Heart right ventricle (tissue), 16 donors: ENCODE measurements at regions of chr5 and their contacts with region 1.

Region 1: DNA sequence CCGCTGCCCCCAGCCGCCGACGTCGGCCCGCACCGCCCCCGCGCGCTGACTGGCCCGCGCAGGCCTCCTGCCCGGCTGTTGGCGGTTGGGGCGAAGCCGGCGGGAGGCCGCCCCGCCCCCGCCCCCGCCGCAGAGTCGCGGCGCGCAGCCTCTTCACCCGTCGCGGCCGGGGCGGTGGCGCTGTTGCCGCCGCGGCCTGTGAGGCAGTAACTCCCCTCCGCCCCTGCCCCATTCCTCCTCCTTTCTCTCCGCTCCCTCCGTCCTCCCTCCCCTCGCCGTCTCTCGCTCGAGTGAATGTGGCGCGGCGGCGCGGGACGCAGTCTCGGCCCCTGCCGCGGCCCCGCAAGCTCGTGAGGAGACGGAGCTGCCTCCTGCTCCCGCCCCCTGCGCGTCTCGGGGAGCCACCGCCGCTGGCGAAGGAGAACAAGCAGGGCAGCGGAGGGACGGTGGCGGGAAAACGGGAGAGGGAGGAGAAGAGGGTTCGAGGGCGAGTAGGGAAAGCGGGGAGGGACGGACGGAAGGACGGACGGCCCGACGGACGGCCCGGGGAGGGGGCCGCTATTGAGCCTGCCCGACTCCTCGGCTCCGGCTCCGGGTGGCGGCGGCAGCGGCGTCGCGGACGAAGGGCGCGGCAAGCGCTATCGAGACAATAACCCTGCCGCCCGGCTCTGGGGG is 637 bp upstream of the ERBIN start:
- DNase-seq: peak; percentile 82 to 87
- ATAC-seq: peak; percentile 81 to 94 (median 89)
- H3K4me3 ChIP-seq: peak overlapping the region; percentile 69 to 95 (median 90)
- H3K27ac ChIP-seq: peak overlapping the region; percentile 92 to 100 (median 100)
- H3K4me1 ChIP-seq: peaks cover 0 to 46% (median 33%) of the 10 kb centered on the region in 9 donors
- H3K27me3 ChIP-seq: no peaks in the 10 kb centered on the region
- CTCF ChIP-seq: peak in 8 of 9 donors; percentile 27 to 67 (median 38)

Region 2: DNA sequence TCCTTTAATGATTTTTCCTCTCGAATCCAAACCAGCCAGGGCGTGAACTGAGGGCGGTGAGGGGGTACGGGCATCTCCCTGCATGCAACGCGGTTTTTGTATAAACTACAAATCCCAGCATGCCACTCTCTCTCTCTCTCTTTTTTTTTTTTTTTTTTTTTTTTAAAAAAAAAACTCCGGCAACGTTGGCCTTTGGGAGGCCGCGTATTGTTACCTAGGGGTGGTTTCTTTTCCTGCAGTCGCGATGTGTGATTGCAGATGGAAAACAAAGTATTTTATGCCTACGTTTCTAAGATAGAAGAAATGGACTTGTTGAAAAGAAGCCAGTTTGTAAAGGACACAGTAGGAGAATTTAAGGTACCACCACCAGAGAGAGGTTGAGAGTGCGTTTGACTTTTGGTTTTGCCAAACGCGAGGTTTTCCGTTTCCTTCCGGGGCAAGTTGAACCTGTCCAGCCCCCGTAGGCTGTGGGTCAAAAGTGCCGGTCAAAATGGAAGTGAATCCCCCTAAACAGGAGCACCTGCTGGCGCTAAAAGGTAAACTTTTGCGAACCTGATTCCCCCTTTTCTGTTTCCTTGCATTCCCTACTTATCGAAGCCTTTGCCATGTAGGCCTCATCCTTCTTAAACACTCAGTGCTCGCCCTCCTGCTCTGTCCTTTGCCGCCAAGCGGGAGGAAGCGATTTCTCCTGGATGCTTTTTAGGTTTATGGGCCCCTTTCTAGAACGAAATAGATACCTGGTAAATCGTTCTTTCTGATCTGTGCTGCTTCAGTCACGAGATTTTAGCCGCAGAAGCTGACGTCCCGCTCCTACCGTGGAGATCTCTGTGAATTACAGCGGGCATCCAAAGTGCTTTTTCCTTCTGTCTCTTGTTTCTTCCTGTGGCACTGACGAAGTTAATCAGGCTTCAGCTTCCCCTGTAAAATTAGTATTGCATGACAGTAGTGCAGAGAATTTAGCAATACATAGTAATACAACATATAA is 300.9 kb before region 1 on chr5 and contains the starts of genes SHLD3 and TRAPPC13:
- intact Hi-C with region 1: loop called in 1 of 10 experiments (anchors 10 kb)
- DNase-seq: peak; percentile 60 to 88
- ATAC-seq: peak; percentile 90 to 96 (median 92)
- H3K4me3 ChIP-seq: peak within 1 kb of the TSS; percentile 71 to 100 (median 87)
- H3K27ac ChIP-seq: peak within 1 kb of the TSS; percentile 72 to 94 (median 90)
- H3K4me1 ChIP-seq: peaks cover 4 to 46% (median 39%) of the 10 kb centered on the region in 9 donors
- H3K27me3 ChIP-seq: no peaks in the 10 kb centered on the region
- CTCF ChIP-seq: peak in 2 of 9 donors; percentile 6 to 7
- total RNA-seq, gene SHLD3: 1.1 to 2.2 (median 1.8) TPM
- total RNA-seq, gene TRAPPC13: 17.7 to 26.3 (median 20.6) TPM

Region 3: GRCh38 chr5:65749956-65750355 is 175.8 kb before region 1 on chr5:
- intact Hi-C with region 1: loop called in 1 of 10 experiments (anchors 10 kb)
- DNase-seq: no peak
- ATAC-seq: no peak
- H3K4me3 ChIP-seq: no peak overlapping the region
- H3K27ac ChIP-seq: no peak overlapping the region
- H3K4me1 ChIP-seq: peaks cover 0 to 9% (median 0%) of the 10 kb centered on the region in 9 donors
- H3K27me3 ChIP-seq: no peaks in the 10 kb centered on the region
- CTCF ChIP-seq: no peak

Region 4: GRCh38 chr5:65774346-65774745 is 151.4 kb before region 1 on chr5:
- intact Hi-C with region 1: no loop called
- DNase-seq: no peak
- ATAC-seq: no peak
- H3K4me3 ChIP-seq: no peak overlapping the region
- H3K27ac ChIP-seq: no peak overlapping the region
- H3K4me1 ChIP-seq: peaks cover 0 to 14% (median 4%) of the 10 kb centered on the region in 9 donors
- H3K27me3 ChIP-seq: no peaks in the 10 kb centered on the region
- CTCF ChIP-seq: no peak

Region 5: GRCh38 chr5:66021585-66021984 is 95.8 kb after region 1 on chr5:
- intact Hi-C with region 1: loop called in 2 of 10 experiments (anchors 5 to 10 kb)
- DNase-seq: no peak
- ATAC-seq: no peak
- H3K4me3 ChIP-seq: no peak overlapping the region
- H3K27ac ChIP-seq: no peak overlapping the region
- H3K4me1 ChIP-seq: no peaks in the 10 kb centered on the region
- H3K27me3 ChIP-seq: no peaks in the 10 kb centered on the region
- CTCF ChIP-seq: no peak

Region 6: GRCh38 chr5:66144074-66144833 is 218.5 kb after region 1 on chr5 and contains the start of gene SREK1:
- intact Hi-C with region 1: loop called in 8 of 10 experiments (anchors 2 to 10 kb)
- DNase-seq: peak; percentile 91 to 93
- ATAC-seq: peak; percentile 95 to 99 (median 97)
- H3K4me3 ChIP-seq: peak within 1 kb of the TSS; percentile 58 to 94 (median 82)
- H3K27ac ChIP-seq: peak within 1 kb of the TSS; percentile 92 to 100 (median 98)
- H3K4me1 ChIP-seq: peaks cover 0 to 50% (median 26%) of the 10 kb centered on the region in 9 donors
- H3K27me3 ChIP-seq: no peaks in the 10 kb centered on the region
- CTCF ChIP-seq: no peak
- total RNA-seq, gene SREK1: 23.4 to 33.6 (median 26.9) TPM